Body of pancreas (tissue), 4 donors: ENCODE measurements at regions of chr12 and their contacts with region 1.

Region 1: GRCh38 chr12:68358532-68359485 is 26.6 kb upstream of the MDM1 start:
- DNase-seq: peak; percentile 57 to 74 (median 64)
- ATAC-seq: peak; percentile 83
- H3K4me3 ChIP-seq: no peak overlapping the region
- H3K27ac ChIP-seq: peak overlapping the region in 1 of 4 donors; percentile 34
- H3K4me1 ChIP-seq: peaks cover 3% of the 10 kb centered on the region
- H3K27me3 ChIP-seq: no peaks in the 10 kb centered on the region
- CTCF ChIP-seq: peak; percentile 43 to 74 (median 60)
- POLR2A ChIP-seq: no peak

Region 2: GRCh38 chr12:67893022-67893580 is 465.7 kb before region 1 on chr12:
- intact Hi-C with region 1: no loop called
- DNase-seq: no peak
- ATAC-seq: no peak
- H3K4me3 ChIP-seq: no peak overlapping the region
- H3K27ac ChIP-seq: no peak overlapping the region
- H3K4me1 ChIP-seq: no peaks in the 10 kb centered on the region
- H3K27me3 ChIP-seq: no peaks in the 10 kb centered on the region
- CTCF ChIP-seq: no peak
- POLR2A ChIP-seq: no peak

Region 3: GRCh38 chr12:68393417-68393816 is 34.6 kb after region 1 on chr12:
- intact Hi-C with region 1: no loop called
- DNase-seq: no peak
- ATAC-seq: no peak
- H3K4me3 ChIP-seq: no peak overlapping the region
- H3K27ac ChIP-seq: no peak overlapping the region
- H3K4me1 ChIP-seq: no peaks in the 10 kb centered on the region
- H3K27me3 ChIP-seq: no peaks in the 10 kb centered on the region
- CTCF ChIP-seq: no peak
- POLR2A ChIP-seq: no peak

Region 4: DNA sequence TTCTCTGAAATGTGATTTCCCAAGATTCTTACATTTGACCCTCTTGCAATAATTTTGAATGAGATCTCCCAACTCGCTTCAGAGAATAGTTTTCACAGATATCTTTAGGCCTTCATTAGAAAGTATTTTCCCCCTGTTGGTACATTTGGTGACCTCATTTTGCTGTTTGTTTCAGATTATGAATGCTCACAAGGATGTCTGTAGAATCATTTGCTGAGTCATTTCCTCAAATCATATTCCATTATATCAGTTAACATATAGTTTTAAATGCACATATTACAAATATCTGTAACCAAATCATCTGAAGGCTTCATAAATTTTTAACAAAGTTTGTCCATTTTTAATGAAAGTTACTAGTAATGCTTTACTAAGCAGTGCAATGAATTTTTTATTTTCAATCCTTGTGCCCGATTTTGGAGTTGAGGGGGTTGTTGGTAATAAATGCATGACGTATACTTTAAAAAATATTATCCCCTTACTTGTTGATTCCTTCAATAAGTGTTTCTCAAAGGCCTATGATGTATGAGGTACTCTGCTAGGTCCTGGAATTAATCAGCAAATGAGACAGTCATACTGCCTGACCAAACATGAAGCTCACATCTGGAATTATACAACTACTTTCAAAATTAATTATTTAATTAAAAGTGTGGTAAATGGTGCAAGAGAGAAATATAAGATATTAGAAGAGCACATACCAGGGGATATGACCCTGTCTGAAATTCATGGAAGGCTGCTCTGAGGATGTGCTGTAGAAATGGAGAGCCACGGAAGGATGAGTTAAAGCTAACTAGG is 125.0 kb after region 1 on chr12:
- intact Hi-C with region 1: no loop called
- DNase-seq: no peak
- ATAC-seq: no peak
- H3K4me3 ChIP-seq: no peak overlapping the region
- H3K27ac ChIP-seq: no peak overlapping the region
- H3K4me1 ChIP-seq: no peaks in the 10 kb centered on the region
- H3K27me3 ChIP-seq: no peaks in the 10 kb centered on the region
- CTCF ChIP-seq: no peak
- POLR2A ChIP-seq: no peak

Region 5: GRCh38 chr12:68665016-68665569 is 306.3 kb after region 1 on chr12:
- intact Hi-C with region 1: loop called (anchors 10 kb)
- DNase-seq: no peak
- ATAC-seq: no peak
- H3K4me3 ChIP-seq: no peak overlapping the region
- H3K27ac ChIP-seq: no peak overlapping the region
- H3K4me1 ChIP-seq: no peaks in the 10 kb centered on the region
- H3K27me3 ChIP-seq: no peaks in the 10 kb centered on the region
- CTCF ChIP-seq: peak in 2 of 7 experiments; percentile 8 to 25
- POLR2A ChIP-seq: no peak